ENCODE measurements at regions of chr1 and their contacts with region 1.

Region 1: DNA sequence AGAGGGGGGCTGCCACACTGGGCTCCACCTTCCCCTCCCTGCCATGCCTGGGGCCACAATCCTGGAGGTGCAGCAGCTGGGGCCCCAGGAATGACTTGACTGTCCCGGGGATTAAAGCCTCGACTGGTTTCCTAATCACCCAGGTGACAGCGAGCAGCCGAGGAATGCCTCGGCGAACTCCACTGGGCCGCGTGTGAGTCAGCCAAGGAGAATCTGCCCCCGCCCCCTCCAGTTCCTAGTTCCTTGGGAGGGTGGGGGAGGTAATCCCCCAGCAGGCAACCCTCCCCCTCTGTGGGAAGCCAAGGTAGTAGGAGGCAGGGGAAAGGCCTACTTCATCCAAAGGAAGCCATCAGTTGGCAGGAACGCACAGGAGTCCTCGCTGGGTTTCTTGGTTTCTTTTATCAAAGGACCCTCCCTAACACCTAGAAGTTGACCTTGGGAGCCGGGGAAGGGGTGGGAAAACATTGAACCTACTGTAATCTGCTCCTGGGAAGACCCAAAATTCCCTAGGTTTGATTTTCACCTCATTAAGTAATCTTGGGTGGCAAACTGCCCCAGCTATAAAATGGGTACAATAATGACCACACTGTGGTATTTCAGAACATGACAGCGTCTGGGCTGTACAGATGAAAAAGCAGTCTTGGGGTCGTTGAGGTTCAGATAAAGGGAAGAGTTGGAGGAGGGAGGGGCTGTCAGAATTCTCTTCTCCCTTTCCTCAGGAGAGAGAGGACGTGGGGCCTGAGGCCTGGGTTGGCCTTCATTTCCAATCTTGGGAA is 1.5 kb downstream of the TENT5B start:
- DNase-seq: peak; percentile 95
- H3K4me3 Mint-ChIP-seq: peak overlapping the region; percentile 78
- H3K27ac Mint-ChIP-seq: peak overlapping the region; percentile 78
- H3K4me1 Mint-ChIP-seq: peaks cover 14% of the 10 kb centered on the region
- H3K27me3 Mint-ChIP-seq: no peaks in the 10 kb centered on the region
- CTCF ChIP-seq: no peak

Region 2: GRCh38 chr1:26744075-26744959 is 266.9 kb before region 1 on chr1:
- CTCF ChIA-PET with region 1: no interaction called
- POLR2A ChIA-PET with region 1: no interaction called
- intact Hi-C with region 1: no loop called
- DNase-seq: peak; percentile 82
- H3K4me3 Mint-ChIP-seq: no peak overlapping the region
- H3K27ac Mint-ChIP-seq: peak overlapping the region; percentile 53
- H3K4me1 Mint-ChIP-seq: peaks cover 18% of the 10 kb centered on the region
- H3K27me3 Mint-ChIP-seq: no peaks in the 10 kb centered on the region
- CTCF ChIP-seq: no peak

Region 3: DNA sequence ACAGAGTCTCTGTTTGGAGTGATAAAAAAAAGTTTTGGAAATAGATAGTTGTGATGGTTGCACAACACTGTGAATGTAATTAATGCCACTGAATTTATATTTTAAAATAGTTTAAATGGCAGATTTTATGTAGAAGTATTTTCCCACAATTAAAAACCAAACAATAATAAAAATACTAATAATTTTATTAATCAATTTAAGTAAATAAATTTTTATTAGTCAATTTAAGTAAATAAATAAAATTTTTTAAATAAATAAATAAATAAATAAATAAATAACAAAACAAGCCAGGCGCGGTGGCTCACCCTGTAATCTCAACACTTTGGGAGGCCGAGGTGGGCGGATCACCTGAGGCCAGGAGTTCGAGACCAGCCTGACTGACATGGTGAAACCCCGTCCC is 46.0 kb before region 1 on chr1:
- CTCF ChIA-PET with region 1: interaction called, 19 read pairs
- POLR2A ChIA-PET with region 1: interaction called, 42 read pairs
- intact Hi-C with region 1: no loop called
- DNase-seq: no peak
- H3K4me3 Mint-ChIP-seq: no peak overlapping the region
- H3K27ac Mint-ChIP-seq: no peak overlapping the region
- H3K4me1 Mint-ChIP-seq: peaks cover 37% of the 10 kb centered on the region
- H3K27me3 Mint-ChIP-seq: no peaks in the 10 kb centered on the region
- CTCF ChIP-seq: no peak

Region 4: DNA sequence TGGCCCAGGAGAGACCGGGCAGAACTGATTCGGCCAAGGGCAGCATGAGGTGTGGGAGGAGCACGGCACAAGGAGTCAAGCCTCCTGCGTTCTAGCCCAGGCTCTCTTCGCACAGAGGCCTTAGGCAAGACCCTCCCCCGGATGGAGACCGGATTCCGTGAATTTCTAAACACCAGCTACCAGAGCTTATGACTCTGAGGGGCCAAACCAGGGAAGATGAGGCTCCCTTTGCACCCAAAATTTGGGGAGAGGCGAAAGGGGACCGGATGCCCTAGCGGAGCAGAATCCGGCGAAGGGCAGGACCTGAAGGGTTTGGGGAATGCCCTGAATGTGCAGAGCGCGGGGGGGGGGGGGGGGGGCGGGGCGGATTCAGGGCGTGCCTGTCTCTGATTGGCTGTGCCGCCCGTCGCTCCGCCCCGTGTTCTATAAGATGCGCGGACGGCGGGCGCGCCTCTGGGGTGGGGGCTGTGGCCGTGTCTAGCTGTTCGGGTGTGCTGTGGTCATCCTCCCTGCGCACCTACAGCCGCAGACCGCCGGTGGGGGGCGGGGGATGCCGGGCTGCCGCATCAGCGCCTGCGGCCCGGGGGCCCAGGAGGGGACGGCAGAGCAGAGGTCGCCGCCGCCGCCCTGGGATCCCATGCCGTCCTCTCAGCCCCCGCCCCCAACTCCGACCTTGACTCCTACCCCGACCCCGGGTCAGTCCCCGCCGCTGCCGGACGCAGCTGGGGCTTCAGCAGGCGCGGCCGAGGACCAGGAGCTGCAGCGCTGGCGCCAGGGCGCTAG is 17.7 kb before region 1 on chr1 and contains the start of gene TRNP1:
- CTCF ChIA-PET with region 1: interaction called, 118 read pairs
- POLR2A ChIA-PET with region 1: interaction called, 535 read pairs
- intact Hi-C with region 1: no loop called
- DNase-seq: peak; percentile 81
- H3K4me3 Mint-ChIP-seq: peak within 1 kb of the TSS; percentile 80
- H3K27ac Mint-ChIP-seq: peak within 1 kb of the TSS; percentile 92
- H3K4me1 Mint-ChIP-seq: peaks cover 45% of the 10 kb centered on the region
- H3K27me3 Mint-ChIP-seq: no peaks in the 10 kb centered on the region
- CTCF ChIP-seq: no peak
- total RNA-seq, gene TRNP1: 56.3 and 59.2 TPM in 2 replicates

Region 5: GRCh38 chr1:26999440-26999987 is 11.7 kb before region 1 on chr1:
- CTCF ChIA-PET with region 1: interaction called, 118 read pairs
- POLR2A ChIA-PET with region 1: interaction called, 535 read pairs
- intact Hi-C with region 1: loop called (anchors 1 kb)
- DNase-seq: peak; percentile 99
- H3K4me3 Mint-ChIP-seq: peak overlapping the region; percentile 80
- H3K27ac Mint-ChIP-seq: peak overlapping the region; percentile 92
- H3K4me1 Mint-ChIP-seq: peaks cover 45% of the 10 kb centered on the region
- H3K27me3 Mint-ChIP-seq: no peaks in the 10 kb centered on the region
- CTCF ChIP-seq: no peak

Region 6: DNA sequence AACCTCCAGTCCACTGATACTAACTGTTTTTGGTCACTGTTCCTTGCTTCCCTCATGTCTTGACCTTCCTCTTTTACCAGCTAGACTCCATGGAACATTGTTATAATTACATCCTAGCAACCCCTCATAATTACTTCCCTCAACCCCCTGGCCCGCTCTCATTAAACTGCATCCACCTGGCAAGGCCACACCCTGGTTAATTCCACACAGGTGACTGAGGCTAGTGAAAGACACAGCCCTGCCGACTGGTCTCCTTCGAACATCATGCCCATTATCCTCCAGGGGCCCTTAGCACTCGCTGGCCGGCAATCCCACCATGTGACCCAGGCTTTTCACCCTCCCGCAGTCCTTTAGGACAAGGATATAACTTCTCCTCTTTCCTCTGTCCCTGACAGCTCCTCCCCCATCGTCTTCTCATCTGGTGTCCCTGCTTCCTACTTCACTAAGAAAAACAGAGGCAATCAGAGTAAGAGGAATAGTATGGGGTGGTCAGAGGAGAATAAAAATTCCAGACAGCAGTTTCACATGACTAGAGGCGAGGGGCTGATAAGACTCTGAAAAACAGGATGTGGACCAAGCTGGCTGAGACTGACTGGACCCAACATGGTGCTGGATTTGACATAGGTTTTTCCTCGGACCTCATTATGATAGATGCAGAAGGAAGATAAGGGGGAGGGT is 10.3 kb after region 1 on chr1:
- CTCF ChIA-PET with region 1: interaction called, 3 read pairs
- POLR2A ChIA-PET with region 1: interaction called, 160 read pairs
- intact Hi-C with region 1: no loop called
- DNase-seq: no peak
- H3K4me3 Mint-ChIP-seq: no peak overlapping the region
- H3K27ac Mint-ChIP-seq: no peak overlapping the region
- H3K4me1 Mint-ChIP-seq: no peaks in the 10 kb centered on the region
- H3K27me3 Mint-ChIP-seq: no peaks in the 10 kb centered on the region
- CTCF ChIP-seq: no peak

Region 7: GRCh38 chr1:27031235-27032118 is 20.3 kb after region 1 on chr1:
- CTCF ChIA-PET with region 1: interaction called, 3 read pairs
- POLR2A ChIA-PET with region 1: interaction called, 160 read pairs
- intact Hi-C with region 1: loop called (anchors 1 kb)
- DNase-seq: peak; percentile 89
- H3K4me3 Mint-ChIP-seq: peak overlapping the region; percentile 48
- H3K27ac Mint-ChIP-seq: peak overlapping the region; percentile 85
- H3K4me1 Mint-ChIP-seq: peaks cover 25% of the 10 kb centered on the region
- H3K27me3 Mint-ChIP-seq: no peaks in the 10 kb centered on the region
- CTCF ChIP-seq: no peak

Region 8: GRCh38 chr1:27057801-27058625 is 46.8 kb after region 1 on chr1:
- CTCF ChIA-PET with region 1: no interaction called
- POLR2A ChIA-PET with region 1: no interaction called
- intact Hi-C with region 1: no loop called
- DNase-seq: no peak
- H3K4me3 Mint-ChIP-seq: no peak overlapping the region
- H3K27ac Mint-ChIP-seq: no peak overlapping the region
- H3K4me1 Mint-ChIP-seq: no peaks in the 10 kb centered on the region
- H3K27me3 Mint-ChIP-seq: no peaks in the 10 kb centered on the region
- CTCF ChIP-seq: no peak